ENCODE measurements at regions of chr10 and their contacts with region 1.

Region 1: DNA sequence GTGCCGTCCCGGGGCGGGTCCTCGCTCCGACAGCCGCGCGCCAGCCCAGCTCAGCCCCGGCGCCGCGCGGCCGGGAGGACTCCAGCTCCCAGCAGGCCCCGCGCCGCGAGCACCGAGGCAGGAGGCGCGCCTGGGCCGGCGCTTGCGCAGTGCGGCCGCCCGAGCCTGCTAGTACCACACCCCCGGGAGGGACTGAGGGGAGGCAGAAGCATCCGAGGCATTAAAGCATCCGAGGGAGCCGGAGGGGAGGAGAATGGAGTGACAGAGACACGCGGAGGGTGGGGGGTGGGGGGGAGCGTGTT is at the start of gene GRK5:
- DNase-seq: peak; percentile 96
- ATAC-seq: peak; percentile 86 to 91
- H3K4me3 ChIP-seq: peak within 1 kb of the TSS; percentile 66
- H3K27ac ChIP-seq: peak within 1 kb of the TSS; percentile 98 to 99
- H3K4me1 ChIP-seq: peaks cover 33% of the 10 kb centered on the region
- CTCF ChIP-seq: no peak
- EP300 ChIP-seq: no peak
- POLR2A ChIP-seq: peak; percentile 69
- RAD21 ChIP-seq: no peak
- polyA plus RNA-seq, gene GRK5: 5.0 and 5.4 TPM in 2 replicates

Region 2: DNA sequence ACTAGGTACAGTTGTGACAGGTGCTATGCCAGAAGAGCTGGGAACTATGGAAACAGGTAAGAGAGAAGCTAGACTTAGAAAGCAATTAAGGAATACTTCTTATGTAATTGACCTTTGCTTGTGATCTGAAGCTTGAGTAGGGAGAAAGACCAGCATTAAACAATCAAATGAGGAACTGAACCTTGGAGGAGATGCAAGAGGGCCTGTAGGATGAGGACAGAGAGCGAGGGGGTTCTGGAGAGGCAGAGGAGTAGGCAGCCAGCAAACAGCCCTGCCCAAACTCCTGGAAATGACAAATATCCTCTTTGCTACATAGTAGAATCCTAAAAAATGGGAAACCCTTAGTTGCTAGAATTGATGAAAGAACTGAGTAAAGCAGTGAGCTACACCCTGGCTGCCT is 823.6 kb before region 1 on chr10:
- CTCF ChIA-PET with region 1: no interaction called
- POLR2A ChIA-PET with region 1: no interaction called
- DNase-seq: no peak
- ATAC-seq: no peak
- H3K4me3 ChIP-seq: no peak overlapping the region
- H3K27ac ChIP-seq: no peak overlapping the region
- H3K4me1 ChIP-seq: no peaks in the 10 kb centered on the region
- CTCF ChIP-seq: no peak
- EP300 ChIP-seq: no peak
- POLR2A ChIP-seq: no peak
- RAD21 ChIP-seq: no peak

Region 3: GRCh38 chr10:119061352-119061751 is 146.0 kb before region 1 on chr10:
- CTCF ChIA-PET with region 1: no interaction called
- POLR2A ChIA-PET with region 1: no interaction called
- DNase-seq: no peak
- ATAC-seq: no peak
- H3K4me3 ChIP-seq: no peak overlapping the region
- H3K27ac ChIP-seq: no peak overlapping the region
- H3K4me1 ChIP-seq: no peaks in the 10 kb centered on the region
- CTCF ChIP-seq: no peak
- EP300 ChIP-seq: no peak
- POLR2A ChIP-seq: no peak
- RAD21 ChIP-seq: no peak

Region 4: DNA sequence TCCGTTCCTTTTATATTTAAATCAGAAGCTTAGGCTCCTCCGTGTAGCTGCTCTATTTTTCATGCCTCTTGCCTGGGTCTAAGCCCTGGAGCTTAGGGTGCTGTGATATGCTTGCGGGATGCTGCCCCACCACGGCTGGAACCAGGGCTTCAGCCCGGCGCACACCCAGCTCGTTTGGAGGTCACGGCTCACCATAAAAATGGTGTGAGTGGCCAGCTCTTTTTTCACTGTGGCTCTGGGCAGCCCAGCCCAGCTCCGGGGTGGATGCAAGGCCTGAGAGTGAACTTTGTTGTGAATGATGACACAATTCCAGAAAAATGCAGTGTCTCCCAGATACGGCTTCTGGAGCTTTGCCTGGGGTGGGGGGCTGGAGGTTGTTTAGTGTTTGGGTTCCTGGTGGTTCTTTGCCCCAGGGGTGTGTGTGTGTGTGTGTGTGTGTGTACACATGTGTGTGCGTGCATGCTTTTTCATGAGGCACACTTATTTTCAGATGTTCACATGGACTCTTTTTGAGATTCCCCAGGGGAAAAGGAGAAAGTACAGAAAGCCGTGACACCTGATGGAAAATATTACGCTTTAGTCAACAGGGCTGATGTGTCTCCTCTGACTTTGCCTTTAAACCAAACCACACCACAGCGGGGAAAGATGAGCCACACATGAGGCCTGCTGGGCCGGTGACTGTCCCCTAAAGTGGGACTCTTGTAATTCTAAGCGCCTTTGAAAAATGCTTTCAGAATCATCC is 46.3 kb after region 1 on chr10:
- CTCF ChIA-PET with region 1: interaction called, 186 read pairs
- POLR2A ChIA-PET with region 1: interaction called, 9 read pairs
- DNase-seq: peak; percentile 82 to 86
- ATAC-seq: peak; percentile 80 to 90
- H3K4me3 ChIP-seq: peak overlapping the region; percentile 13; the same call in 1 of the 3 replicates
- H3K27ac ChIP-seq: peak overlapping the region; percentile 93 to 95
- H3K4me1 ChIP-seq: peaks cover 60% of the 10 kb centered on the region
- CTCF ChIP-seq: no peak
- EP300 ChIP-seq: peak in 1 of 2 experiments; percentile 40; a peak in 1 of 5 replicates
- POLR2A ChIP-seq: no peak
- RAD21 ChIP-seq: peak; percentile 5 to 35; a peak in 3 of 5 replicates

Region 5: GRCh38 chr10:119305860-119306513 is 98.7 kb after region 1 on chr10:
- CTCF ChIA-PET with region 1: interaction called, 13 read pairs
- POLR2A ChIA-PET with region 1: interaction called, 8 read pairs
- DNase-seq: peak; percentile 83 to 92
- ATAC-seq: peak; percentile 86 to 89
- H3K4me3 ChIP-seq: no peak overlapping the region
- H3K27ac ChIP-seq: peak overlapping the region; percentile 75 to 90
- H3K4me1 ChIP-seq: peaks cover 75% of the 10 kb centered on the region
- CTCF ChIP-seq: no peak
- EP300 ChIP-seq: peak; percentile 19 to 47; a peak in 2 of 5 replicates
- POLR2A ChIP-seq: no peak
- RAD21 ChIP-seq: no peak; a peak in 3 of 5 replicates

Region 6: GRCh38 chr10:119421887-119422681 is 214.8 kb after region 1 on chr10:
- CTCF ChIA-PET with region 1: interaction called, 283 read pairs
- POLR2A ChIA-PET with region 1: interaction called, 6 read pairs
- DNase-seq: no peak
- ATAC-seq: no peak
- H3K4me3 ChIP-seq: no peak overlapping the region
- H3K27ac ChIP-seq: no peak overlapping the region
- H3K4me1 ChIP-seq: no peaks in the 10 kb centered on the region
- CTCF ChIP-seq: no peak
- EP300 ChIP-seq: no peak
- POLR2A ChIP-seq: no peak
- RAD21 ChIP-seq: no peak

Region 7: GRCh38 chr10:119450618-119451304 is 243.4 kb after region 1 on chr10:
- CTCF ChIA-PET with region 1: interaction called, 186 read pairs
- POLR2A ChIA-PET with region 1: interaction called, 9 read pairs
- DNase-seq: no peak
- ATAC-seq: no peak
- H3K4me3 ChIP-seq: no peak overlapping the region
- H3K27ac ChIP-seq: 0 out of 6 replicates have a peak overlapping the region, but pooled peaks of 1 of the 2 experiments have one; percentile 22
- H3K4me1 ChIP-seq: peaks cover 10% of the 10 kb centered on the region
- CTCF ChIP-seq: no peak
- EP300 ChIP-seq: no peak
- POLR2A ChIP-seq: no peak
- RAD21 ChIP-seq: no peak

Region 8: DNA sequence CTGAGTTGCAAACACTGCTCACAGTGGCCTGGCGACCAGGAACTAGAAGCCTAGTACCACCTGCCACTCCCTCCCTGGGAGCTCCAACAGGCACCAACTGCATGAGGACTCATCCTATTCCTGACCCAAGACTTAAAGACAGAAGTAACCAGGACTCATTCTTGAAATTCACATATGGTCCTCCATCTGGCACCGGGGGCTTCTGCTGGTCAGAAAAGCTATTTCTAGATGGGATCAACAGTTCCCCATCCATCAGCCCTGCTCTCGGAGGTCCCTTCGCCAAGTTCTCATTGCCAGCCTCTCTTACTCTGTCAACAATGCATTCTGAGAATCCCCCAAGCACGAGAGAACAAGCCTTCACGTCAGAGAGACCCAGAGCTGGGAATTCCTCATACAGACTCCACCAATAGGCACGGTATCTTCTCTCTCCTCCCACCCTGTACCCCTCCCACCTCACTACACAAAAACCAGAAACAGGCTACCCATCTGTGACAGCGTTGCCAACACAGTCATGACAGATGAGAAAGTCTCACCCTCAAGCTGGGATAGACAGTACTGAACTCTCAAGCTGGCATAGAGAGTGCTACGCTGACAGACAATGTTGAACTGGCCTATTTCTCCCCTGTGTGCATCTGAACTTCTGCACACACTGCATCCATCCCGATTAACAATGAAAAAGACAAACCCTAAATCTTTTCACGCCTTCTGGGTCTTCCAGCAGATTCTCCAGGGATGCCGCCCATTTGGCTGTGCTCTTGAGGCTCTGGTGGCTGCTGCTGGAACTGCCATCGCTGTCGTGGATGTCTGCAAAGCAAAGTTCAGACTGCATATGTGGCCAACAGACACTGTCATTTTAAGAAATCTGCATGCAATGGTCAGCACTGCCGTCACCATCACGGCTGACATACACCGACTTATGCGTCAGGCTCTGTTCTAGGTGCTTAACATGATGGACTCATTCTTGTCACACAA is 319.6 kb after region 1 on chr10:
- CTCF ChIA-PET with region 1: interaction called, 11 read pairs
- POLR2A ChIA-PET with region 1: no interaction called
- DNase-seq: peak in 1 of 2 experiments; percentile 25
- ATAC-seq: peak; percentile 66 to 82; a peak in 4 of 6 replicates
- H3K4me3 ChIP-seq: no peak overlapping the region
- H3K27ac ChIP-seq: no peak overlapping the region
- H3K4me1 ChIP-seq: peaks cover 4% of the 10 kb centered on the region
- CTCF ChIP-seq: no peak
- EP300 ChIP-seq: no peak
- POLR2A ChIP-seq: no peak
- RAD21 ChIP-seq: no peak